ENCODE measurements at regions of chr1 and their contacts with region 1.

Region 1: DNA sequence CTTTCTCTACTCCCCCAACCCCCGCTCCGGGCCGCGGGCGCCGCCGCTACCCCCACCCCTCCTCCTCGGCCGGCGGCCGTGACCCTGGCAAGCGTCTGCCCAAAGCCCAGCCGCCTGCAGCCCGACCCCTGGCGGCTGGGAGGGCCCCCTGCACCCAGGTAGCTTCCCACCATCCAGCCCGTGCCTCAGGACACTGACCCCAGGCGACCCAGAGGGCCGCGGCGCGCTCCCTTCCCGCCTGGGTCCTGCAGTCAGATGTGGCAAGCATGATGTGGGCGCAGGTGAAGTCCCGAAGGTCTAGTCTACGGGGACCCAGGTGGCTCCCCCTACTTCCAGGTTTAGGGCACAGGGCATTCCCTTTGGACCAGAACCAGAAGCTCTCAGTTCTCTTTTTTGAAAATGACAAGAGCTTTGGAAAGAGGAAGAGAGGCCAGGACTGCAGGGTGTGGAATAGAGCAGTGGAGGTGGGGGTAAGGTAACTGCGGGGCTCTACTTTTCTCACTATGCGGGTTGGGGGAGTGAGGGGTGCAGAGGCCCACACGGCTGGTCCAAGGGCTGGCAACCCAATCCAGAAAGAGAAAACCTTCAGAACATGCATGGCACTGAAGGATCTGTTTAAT is at the start of gene DENND4B:
- DNase-seq: peak; percentile 65
- ATAC-seq: peak; percentile 95
- H3K4me3 ChIP-seq: peak within 1 kb of the TSS; percentile 98
- H3K27ac ChIP-seq: peak within 1 kb of the TSS; percentile 97
- H3K4me1 ChIP-seq: peaks cover 9% of the 10 kb centered on the region
- H3K27me3 ChIP-seq: no peaks in the 10 kb centered on the region
- CTCF ChIP-seq: peak; percentile 92
- POLR2A ChIP-seq: no peak
- RAD21 ChIP-seq: peak; percentile 71
- total RNA-seq, gene DENND4B: 1.8 and 2.5 TPM in 2 replicates

Region 2: GRCh38 chr1:153796791-153797659 is 149.7 kb before region 1 on chr1:
- CTCF ChIA-PET with region 1: no interaction called
- POLR2A ChIA-PET with region 1: no interaction called
- dilution Hi-C with region 1: no loop called
- in situ Hi-C with region 1: loop called (anchors 5 kb)
- intact Hi-C with region 1: loop called (anchors 1 kb)
- DNase-seq: peak; percentile 61
- ATAC-seq: peak; percentile 76
- H3K4me3 ChIP-seq: no peak overlapping the region
- H3K27ac ChIP-seq: no peak overlapping the region
- H3K4me1 ChIP-seq: no peaks in the 10 kb centered on the region
- H3K27me3 ChIP-seq: no peaks in the 10 kb centered on the region
- CTCF ChIP-seq: peak; percentile 79
- POLR2A ChIP-seq: no peak
- RAD21 ChIP-seq: peak; percentile 75

Region 3: GRCh38 chr1:153816283-153816889 is 130.3 kb before region 1 on chr1:
- CTCF ChIA-PET with region 1: no interaction called
- POLR2A ChIA-PET with region 1: no interaction called
- dilution Hi-C with region 1: no loop called
- in situ Hi-C with region 1: no loop called
- intact Hi-C with region 1: loop called (anchors 1 kb)
- DNase-seq: no peak
- ATAC-seq: no peak
- H3K4me3 ChIP-seq: no peak overlapping the region
- H3K27ac ChIP-seq: no peak overlapping the region
- H3K4me1 ChIP-seq: no peaks in the 10 kb centered on the region
- H3K27me3 ChIP-seq: no peaks in the 10 kb centered on the region
- CTCF ChIP-seq: no peak
- POLR2A ChIP-seq: no peak
- RAD21 ChIP-seq: no peak

Region 4: GRCh38 chr1:153967082-153968000 is 20.6 kb after region 1 on chr1 and contains the start of gene CREB3L4:
- CTCF ChIA-PET with region 1: interaction called, 10 read pairs
- POLR2A ChIA-PET with region 1: no interaction called
- dilution Hi-C with region 1: no loop called
- in situ Hi-C with region 1: no loop called
- intact Hi-C with region 1: no loop called
- DNase-seq: peak; percentile 98
- ATAC-seq: peak; percentile 83
- H3K4me3 ChIP-seq: peak within 1 kb of the TSS; percentile 59
- H3K27ac ChIP-seq: peak within 1 kb of the TSS; percentile 77
- H3K4me1 ChIP-seq: peaks cover 3% of the 10 kb centered on the region; the same call in 1 of the 2 replicates
- H3K27me3 ChIP-seq: no peaks in the 10 kb centered on the region
- CTCF ChIP-seq: peak; percentile 60
- POLR2A ChIP-seq: peak; percentile 66; the same call in 1 of the 2 replicates
- RAD21 ChIP-seq: peak; percentile 19; the same call in 1 of the 2 replicates
- total RNA-seq, gene CREB3L4: 4.4 and 6.5 TPM in 2 replicates